H1 (cell line): ENCODE measurements at regions of chr9 and their contacts with region 1.

Region 1: DNA sequence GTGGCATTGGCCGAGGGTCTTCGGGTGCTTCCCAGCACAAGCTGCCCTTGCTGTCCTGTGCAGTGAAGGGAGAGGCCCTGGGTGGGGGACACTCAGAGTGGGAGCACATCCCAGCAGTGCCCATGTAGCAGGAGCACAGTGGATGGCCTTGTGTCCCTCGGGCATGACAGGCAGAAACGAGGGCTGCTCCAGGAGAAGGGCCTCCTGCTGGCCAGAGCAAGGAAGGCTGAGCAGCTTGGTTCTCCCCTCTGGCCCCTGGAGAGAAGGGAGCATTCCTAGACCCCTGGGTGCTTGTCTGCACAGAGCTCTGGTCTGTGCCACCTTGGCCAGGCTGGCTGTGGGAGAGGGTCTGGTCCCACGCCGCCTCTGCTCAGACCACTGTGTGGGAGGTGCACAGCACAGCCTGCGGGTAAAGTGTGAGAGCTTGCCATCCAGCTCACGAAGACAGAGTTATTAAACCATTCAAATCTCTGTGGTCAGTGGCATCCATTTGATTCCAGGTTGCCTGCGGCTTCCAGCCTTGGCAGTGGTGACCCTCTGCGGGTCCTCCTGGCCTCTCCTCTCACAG is 18.3 kb downstream of the FBXW5 start:
- DNase-seq: no peak
- H3K4me3 ChIP-seq: no peak overlapping the region
- H3K27ac ChIP-seq: no peak overlapping the region
- H3K4me1 ChIP-seq: no peaks in the 10 kb centered on the region
- H3K27me3 ChIP-seq: no peaks in the 10 kb centered on the region
- CTCF ChIP-seq: peak in 1 of 3 experiments; percentile 7; a peak in 1 of 4 replicates
- EP300 ChIP-seq: no peak
- POLR2A ChIP-seq: no peak
- RAD21 ChIP-seq: no peak

Region 2: DNA sequence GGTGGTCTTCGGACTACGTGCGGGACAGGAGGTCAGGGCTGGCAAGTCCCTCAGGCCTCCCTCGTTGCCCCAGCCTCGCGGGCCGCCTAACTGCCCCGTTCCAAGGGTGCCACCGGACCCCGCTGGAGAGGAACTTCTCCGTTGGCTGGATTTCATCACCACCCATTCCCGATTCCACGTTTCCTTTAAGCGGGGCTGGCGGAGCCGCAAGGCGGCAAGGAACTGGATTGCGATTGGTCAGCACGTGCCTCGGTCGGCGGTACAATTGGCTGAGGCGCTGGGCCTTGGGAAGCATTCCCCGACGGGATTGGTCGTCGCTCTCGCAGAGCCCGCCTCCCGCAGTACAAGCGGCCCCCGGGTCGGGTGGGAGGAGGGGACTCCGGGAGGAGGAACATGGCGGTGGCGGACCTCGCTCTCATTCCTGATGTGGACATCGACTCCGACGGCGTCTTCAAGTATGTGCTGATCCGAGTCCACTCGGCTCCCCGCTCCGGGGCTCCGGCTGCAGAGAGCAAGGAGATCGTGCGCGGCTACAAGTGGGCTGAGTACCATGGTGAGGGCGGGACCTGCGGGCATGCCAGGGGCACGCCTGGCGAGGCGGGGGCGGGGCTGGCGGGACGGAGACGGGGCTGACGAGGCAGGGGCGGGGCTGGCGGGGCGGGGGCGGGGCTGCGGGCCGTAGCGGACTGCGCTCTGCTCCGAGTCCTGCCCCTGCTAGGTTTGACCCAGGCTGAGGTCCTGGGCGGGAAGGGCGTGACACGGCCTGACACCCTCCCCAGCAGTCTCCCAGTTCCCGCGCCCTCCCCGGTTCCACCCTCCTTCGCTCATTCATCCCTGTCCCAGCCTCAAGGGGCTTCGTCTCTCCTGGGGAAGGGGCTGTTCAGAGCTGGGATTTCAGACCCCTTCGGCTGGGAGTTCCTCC is 76.9 kb before region 1 on chr9 and contains the start of gene PHPT1:
- CTCF ChIA-PET with region 1: interaction called, 16 read pairs
- POLR2A ChIA-PET with region 1: interaction called, 3 read pairs
- DNase-seq: peak; percentile 98
- H3K4me3 ChIP-seq: peak within 1 kb of the TSS; percentile 81 to 89 (median 84)
- H3K27ac ChIP-seq: peak within 1 kb of the TSS; percentile 90
- H3K4me1 ChIP-seq: peaks cover 0 to 18% (median 8%) of the 10 kb centered on the region in 4 experiments; a peak in 5 of 7 replicates
- H3K27me3 ChIP-seq: peaks cover 2 to 12% (median 7%) of the 10 kb centered on the region in 4 experiments; a peak in 6 of 7 replicates
- CTCF ChIP-seq: no peak
- EP300 ChIP-seq: no peak
- POLR2A ChIP-seq: peak in 1 of 2 experiments; percentile 99; a peak in 2 of 3 replicates
- RAD21 ChIP-seq: no peak
- total RNA-seq, gene PHPT1: 109 and 111 TPM in 2 replicates